ENCODE measurements at regions of chr3 and their contacts with region 1.

Region 1: DNA sequence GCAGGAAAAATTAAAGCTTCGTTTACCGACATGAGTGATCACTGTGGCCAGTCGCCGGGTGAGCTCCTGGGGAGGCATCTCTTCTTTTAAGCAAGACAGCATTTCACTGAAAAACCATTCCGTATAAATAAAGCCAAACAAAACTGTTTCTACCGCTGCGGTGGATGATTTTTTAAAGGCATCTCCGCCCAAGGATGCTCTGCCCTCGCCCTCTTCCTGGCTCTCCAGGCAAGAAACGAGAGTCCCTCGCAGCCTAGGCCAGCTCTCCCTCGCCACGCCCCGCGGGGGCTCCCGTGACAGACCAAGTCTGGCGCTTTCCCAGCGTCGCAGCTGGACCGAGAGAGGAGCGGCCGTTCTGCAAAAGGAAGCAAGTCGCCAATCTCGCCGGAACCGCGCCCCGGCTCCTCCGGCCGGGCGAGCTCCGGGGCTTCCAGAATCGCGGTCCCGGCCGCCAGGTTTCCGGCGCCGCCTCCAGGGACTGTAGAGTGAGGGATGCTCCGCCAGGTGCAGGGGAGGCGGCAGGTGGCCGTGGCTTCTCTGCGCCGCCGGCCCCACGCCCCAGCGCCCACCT is 458 bp downstream of the MCF2L2 start:
- DNase-seq: peak; percentile 82
- H3K4me3 Mint-ChIP-seq: peak overlapping the region; percentile 82
- H3K27ac Mint-ChIP-seq: peak overlapping the region; percentile 57
- H3K4me1 Mint-ChIP-seq: peaks cover 35% of the 10 kb centered on the region
- H3K27me3 Mint-ChIP-seq: peaks cover 2% of the 10 kb centered on the region

Region 2: GRCh38 chr3:183131735-183132134 is 296.2 kb before region 1 on chr3:
- intact Hi-C with region 1: no loop called
- DNase-seq: no peak
- H3K4me3 Mint-ChIP-seq: no peak overlapping the region
- H3K27ac Mint-ChIP-seq: no peak overlapping the region
- H3K4me1 Mint-ChIP-seq: no peaks in the 10 kb centered on the region
- H3K27me3 Mint-ChIP-seq: no peaks in the 10 kb centered on the region

Region 3: DNA sequence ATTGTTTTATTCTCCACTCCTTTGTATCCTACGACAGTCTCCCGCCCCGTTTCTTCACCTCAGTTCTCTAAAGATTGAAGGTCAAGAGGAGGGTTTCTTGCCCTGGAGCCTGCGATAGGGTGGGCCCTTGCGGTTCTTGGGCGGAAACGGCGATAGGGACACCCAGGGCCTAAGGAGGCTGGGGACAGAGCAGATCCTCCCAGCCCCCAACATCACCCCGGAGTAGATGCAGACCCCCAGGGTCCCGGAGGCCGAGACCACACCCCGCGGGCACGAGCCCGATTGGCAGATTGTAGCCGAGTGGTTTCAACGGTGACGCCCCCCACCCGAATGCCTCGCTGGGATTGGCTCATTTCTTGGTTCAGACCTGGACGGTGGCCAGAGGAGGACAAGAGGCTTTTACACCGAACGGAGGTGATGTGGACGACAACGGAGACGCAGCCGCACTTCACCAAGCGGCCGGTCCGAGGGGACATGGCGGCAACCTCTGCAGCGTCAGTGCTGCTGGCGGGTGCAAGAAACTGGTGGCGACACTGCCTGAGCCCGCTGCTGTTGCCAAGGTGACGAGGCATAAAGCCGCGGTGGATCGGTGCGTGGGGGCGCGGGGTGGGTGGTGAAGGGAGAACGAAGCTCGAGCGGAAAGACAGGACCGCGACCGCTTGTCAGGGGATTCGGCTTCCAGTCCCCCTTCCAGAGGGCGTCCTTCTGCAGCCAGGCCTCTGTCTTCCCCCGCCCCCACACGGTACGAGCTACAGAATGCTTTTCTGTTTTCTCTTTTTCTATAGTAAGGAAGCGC is 19.4 kb after region 1 on chr3:
- intact Hi-C with region 1: loop called (anchors 1 kb)
- DNase-seq: peak; percentile 94
- H3K4me3 Mint-ChIP-seq: peak overlapping the region; percentile 98
- H3K27ac Mint-ChIP-seq: peak overlapping the region; percentile 90
- H3K4me1 Mint-ChIP-seq: peaks cover 15% of the 10 kb centered on the region
- H3K27me3 Mint-ChIP-seq: peaks cover 14% of the 10 kb centered on the region

Region 4: DNA sequence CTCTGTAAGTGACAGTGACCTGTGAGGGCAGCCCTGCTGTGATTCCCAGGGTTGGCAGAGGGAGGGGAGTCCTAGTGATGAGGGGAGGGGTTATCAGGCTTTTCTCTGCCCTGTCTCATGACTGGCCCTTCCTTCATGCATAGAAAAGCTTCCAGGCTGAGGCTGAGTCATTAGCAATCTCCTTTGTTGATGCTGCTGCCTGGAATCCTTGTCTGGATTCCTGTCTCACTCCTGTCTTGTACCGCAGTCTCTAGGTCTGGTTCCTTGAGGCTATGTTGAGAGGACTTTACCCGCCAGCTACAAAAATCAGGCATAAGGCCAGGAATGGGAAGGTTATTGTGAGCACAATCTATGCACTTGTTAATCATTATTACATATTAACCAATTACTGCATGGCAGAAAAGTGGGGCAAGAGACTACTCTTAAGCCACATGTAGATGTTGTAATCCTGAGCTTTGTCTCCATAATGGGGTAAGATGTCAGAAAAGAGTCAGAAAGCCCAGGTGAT is 120.4 kb after region 1 on chr3:
- intact Hi-C with region 1: no loop called
- DNase-seq: no peak
- H3K4me3 Mint-ChIP-seq: no peak overlapping the region
- H3K27ac Mint-ChIP-seq: no peak overlapping the region
- H3K4me1 Mint-ChIP-seq: peaks cover 51% of the 10 kb centered on the region
- H3K27me3 Mint-ChIP-seq: no peaks in the 10 kb centered on the region

Region 5: GRCh38 chr3:183591881-183592521 is 164.0 kb after region 1 on chr3:
- intact Hi-C with region 1: no loop called
- DNase-seq: no peak
- H3K4me3 Mint-ChIP-seq: peak overlapping the region; percentile 39
- H3K27ac Mint-ChIP-seq: peak overlapping the region; percentile 63
- H3K4me1 Mint-ChIP-seq: peaks cover 21% of the 10 kb centered on the region
- H3K27me3 Mint-ChIP-seq: no peaks in the 10 kb centered on the region

Measured in activated CD4-positive, alpha-beta T cell treated with anti-CD3 and anti-CD28 coated beads, Interleukin-2, amount 10 ng/mL, durations not matched to agents 24 days and 14 days (primary cell).